ENCODE measurements at regions of chr20 and their contacts with region 1.

Region 1: GRCh38 chr20:13389115-13389514 is 168.0 kb downstream of the ISM1 start:
- DNase-seq: no peak
- ATAC-seq: no peak
- H3K4me3 ChIP-seq: no peak overlapping the region
- H3K27ac ChIP-seq: no peak overlapping the region
- H3K4me1 ChIP-seq: no peaks in the 10 kb centered on the region
- H3K27me3 ChIP-seq: no peaks in the 10 kb centered on the region
- CTCF ChIP-seq: no peak

Region 2: DNA sequence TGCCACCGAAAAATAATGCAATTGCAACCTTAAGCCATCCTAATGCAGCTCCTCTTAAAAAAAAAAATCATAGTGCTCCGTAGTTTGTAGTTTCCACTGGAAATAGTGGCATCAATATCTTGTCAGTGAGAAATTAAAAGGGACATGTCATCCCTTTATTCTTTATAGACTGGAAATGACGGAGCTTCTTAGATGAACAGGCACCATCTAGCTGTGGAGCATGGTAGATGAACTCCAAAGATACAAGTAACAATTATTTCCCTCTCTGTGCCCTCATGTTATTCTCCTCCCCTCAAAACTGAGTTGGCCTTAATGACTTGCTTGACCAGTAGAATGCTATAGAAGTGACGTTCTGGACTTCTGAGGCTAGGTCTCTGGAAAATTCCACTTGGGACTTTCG is 648.5 kb before region 1 on chr20:
- intact Hi-C with region 1: no loop called
- DNase-seq: no peak
- ATAC-seq: no peak
- H3K4me3 ChIP-seq: no peak overlapping the region
- H3K27ac ChIP-seq: no peak overlapping the region
- H3K4me1 ChIP-seq: no peaks in the 10 kb centered on the region
- H3K27me3 ChIP-seq: no peaks in the 10 kb centered on the region
- CTCF ChIP-seq: no peak

Region 3: DNA sequence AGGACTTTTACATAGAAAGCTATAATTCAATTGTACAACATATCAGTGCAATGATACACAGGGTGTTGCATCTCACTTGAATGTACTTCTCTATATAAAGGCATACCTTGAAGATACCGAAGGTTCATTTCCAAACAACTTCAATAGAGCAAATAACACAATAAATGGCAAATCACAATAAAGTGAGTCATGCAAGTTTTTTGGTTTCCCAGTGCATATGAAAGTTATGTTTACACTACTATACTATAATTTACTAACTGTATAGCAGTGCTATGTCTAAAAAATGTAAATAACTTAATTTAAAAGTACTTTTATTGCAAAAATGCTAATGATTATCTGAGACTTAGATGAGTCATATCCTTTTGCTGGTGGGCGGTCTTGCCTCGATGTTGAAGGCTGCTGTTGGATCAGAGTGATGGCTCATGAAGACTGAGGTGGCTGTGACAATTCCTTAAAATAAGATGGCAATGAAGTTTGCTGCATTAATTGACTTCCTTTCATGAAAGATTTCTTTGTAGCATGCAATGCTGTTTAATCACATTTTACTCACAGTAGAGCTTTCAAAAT is 60.8 kb after region 1 on chr20:
- intact Hi-C with region 1: loop called in 1 of 10 experiments (anchors 5 kb)
- DNase-seq: no peak
- ATAC-seq: no peak
- H3K4me3 ChIP-seq: no peak overlapping the region
- H3K27ac ChIP-seq: no peak overlapping the region
- H3K4me1 ChIP-seq: no peaks in the 10 kb centered on the region
- H3K27me3 ChIP-seq: no peaks in the 10 kb centered on the region
- CTCF ChIP-seq: no peak

Measured in heart right ventricle (tissue), 16 donors.